WTC11 (cell line): ENCODE measurements at regions of chr17 and their contacts with region 1.

Region 1: DNA sequence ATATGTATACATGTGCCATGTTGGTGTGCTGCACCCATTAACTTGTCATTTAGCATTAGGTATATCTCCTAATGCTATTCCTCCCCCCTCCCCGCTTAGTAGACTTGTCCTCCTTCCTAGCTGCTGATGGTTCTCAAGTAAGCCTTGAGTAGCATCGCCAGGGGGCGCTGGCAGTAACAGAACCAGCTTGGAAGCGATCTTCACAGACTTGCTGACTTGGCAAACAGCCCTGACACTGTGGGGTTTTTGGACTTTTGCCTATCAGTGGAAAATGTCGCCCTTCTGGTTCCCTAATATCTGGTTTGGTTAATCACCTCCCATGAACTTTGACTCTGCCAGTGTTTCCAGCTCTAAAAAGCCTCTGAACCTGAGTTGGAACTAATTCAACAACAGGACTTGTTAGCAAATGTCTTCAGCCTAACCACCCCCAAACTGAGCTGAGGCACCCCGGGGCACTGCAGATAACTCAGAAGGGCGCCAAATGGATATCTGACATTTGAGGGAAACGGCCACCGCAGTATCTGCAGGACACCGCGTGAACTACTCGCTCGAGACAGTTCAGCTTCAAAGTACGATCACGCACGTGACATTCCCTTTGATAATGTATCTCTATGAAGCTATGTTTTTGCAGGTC is 15.4 kb upstream of the SPATA32 start:
- DNase-seq: peak; percentile 96
- ATAC-seq: peak; percentile 87
- H3K4me3 Mint-ChIP-seq: no peak overlapping the region
- H3K27ac Mint-ChIP-seq: no peak overlapping the region
- H3K4me1 Mint-ChIP-seq: peaks cover 12% of the 10 kb centered on the region
- H3K27me3 Mint-ChIP-seq: no peaks in the 10 kb centered on the region
- CTCF ChIP-seq: peak; percentile 72

Region 2: DNA sequence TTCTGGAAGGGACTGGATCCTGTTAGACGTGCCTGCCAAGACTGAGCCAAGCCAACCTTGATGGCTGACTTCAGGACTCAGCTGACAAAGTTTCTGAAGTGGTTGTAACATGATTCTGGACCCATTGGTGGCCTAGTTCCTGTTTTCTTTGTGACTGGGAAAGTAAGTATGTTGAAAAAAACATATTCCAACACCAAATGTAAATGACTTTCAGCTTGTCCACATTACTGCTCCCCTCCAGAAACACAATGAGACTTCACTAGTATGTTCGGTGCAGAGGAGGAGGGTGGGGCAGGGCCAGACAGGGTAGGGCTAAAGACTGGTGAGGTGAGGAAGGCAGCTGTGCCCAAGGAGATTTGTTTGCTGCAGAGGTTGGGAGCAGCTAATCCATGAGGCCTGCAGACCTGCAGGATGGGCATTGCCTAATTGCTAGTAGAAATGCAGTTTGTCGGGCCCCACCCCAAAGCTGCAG is 189.8 kb before region 1 on chr17:
- CTCF ChIA-PET with region 1: no interaction called
- POLR2A ChIA-PET with region 1: no interaction called
- DNase-seq: no peak
- ATAC-seq: no peak
- H3K4me3 Mint-ChIP-seq: no peak overlapping the region
- H3K27ac Mint-ChIP-seq: no peak overlapping the region
- H3K4me1 Mint-ChIP-seq: peaks cover 7% of the 10 kb centered on the region
- H3K27me3 Mint-ChIP-seq: no peaks in the 10 kb centered on the region
- CTCF ChIP-seq: no peak

Region 3: GRCh38 chr17:45218895-45219661 is 58.3 kb before region 1 on chr17:
- CTCF ChIA-PET with region 1: interaction called, 30 read pairs
- POLR2A ChIA-PET with region 1: no interaction called
- DNase-seq: peak; percentile 95
- ATAC-seq: peak; percentile 54
- H3K4me3 Mint-ChIP-seq: peak overlapping the region; percentile 38
- H3K27ac Mint-ChIP-seq: no peak overlapping the region
- H3K4me1 Mint-ChIP-seq: peaks cover 7% of the 10 kb centered on the region; the same call in 1 of the 2 replicates
- H3K27me3 Mint-ChIP-seq: peaks cover 60% of the 10 kb centered on the region
- CTCF ChIP-seq: peak; percentile 98

Region 4: GRCh38 chr17:45235416-45236281 is 41.7 kb before region 1 on chr17:
- CTCF ChIA-PET with region 1: interaction called, 24 read pairs
- POLR2A ChIA-PET with region 1: no interaction called
- DNase-seq: peak; percentile 94
- ATAC-seq: peak; percentile 69
- H3K4me3 Mint-ChIP-seq: no peak overlapping the region
- H3K27ac Mint-ChIP-seq: no peak overlapping the region
- H3K4me1 Mint-ChIP-seq: peaks cover 9% of the 10 kb centered on the region
- H3K27me3 Mint-ChIP-seq: peaks cover 63% of the 10 kb centered on the region
- CTCF ChIP-seq: peak; percentile 81

Region 5: DNA sequence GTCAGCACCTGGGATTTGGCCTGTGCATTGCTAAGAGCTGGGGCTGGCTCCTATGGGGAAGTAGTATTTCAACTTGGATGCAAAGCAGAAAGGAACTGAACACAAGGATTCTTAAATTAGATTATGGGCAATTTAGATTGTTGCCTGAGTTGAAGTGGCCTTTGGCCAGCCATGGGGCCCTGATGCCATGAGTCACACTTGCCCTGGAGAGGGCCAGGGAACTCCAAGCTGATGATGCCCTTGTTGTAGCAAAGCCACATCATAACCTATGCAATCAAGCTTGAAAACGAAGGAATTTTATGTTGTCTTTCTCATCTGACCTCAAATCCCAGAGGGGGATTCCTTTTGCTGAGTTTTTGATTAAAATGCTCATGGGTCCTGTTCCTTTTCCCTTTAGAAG is 11.5 kb before region 1 on chr17:
- CTCF ChIA-PET with region 1: interaction called, 16 read pairs
- POLR2A ChIA-PET with region 1: no interaction called
- DNase-seq: no peak
- ATAC-seq: no peak
- H3K4me3 Mint-ChIP-seq: no peak overlapping the region
- H3K27ac Mint-ChIP-seq: no peak overlapping the region
- H3K4me1 Mint-ChIP-seq: peaks cover 9% of the 10 kb centered on the region; the same call in 1 of the 2 replicates
- H3K27me3 Mint-ChIP-seq: peaks cover 7% of the 10 kb centered on the region
- CTCF ChIP-seq: no peak

Region 6: GRCh38 chr17:45317112-45317928 is 40.0 kb after region 1 on chr17:
- CTCF ChIA-PET with region 1: interaction called, 28 read pairs
- POLR2A ChIA-PET with region 1: no interaction called
- DNase-seq: peak; percentile 100
- ATAC-seq: peak; percentile 92
- H3K4me3 Mint-ChIP-seq: peak overlapping the region; percentile 85
- H3K27ac Mint-ChIP-seq: peak overlapping the region; percentile 90
- H3K4me1 Mint-ChIP-seq: peaks cover 22% of the 10 kb centered on the region
- H3K27me3 Mint-ChIP-seq: peaks cover 37% of the 10 kb centered on the region
- CTCF ChIP-seq: no peak

Region 7: DNA sequence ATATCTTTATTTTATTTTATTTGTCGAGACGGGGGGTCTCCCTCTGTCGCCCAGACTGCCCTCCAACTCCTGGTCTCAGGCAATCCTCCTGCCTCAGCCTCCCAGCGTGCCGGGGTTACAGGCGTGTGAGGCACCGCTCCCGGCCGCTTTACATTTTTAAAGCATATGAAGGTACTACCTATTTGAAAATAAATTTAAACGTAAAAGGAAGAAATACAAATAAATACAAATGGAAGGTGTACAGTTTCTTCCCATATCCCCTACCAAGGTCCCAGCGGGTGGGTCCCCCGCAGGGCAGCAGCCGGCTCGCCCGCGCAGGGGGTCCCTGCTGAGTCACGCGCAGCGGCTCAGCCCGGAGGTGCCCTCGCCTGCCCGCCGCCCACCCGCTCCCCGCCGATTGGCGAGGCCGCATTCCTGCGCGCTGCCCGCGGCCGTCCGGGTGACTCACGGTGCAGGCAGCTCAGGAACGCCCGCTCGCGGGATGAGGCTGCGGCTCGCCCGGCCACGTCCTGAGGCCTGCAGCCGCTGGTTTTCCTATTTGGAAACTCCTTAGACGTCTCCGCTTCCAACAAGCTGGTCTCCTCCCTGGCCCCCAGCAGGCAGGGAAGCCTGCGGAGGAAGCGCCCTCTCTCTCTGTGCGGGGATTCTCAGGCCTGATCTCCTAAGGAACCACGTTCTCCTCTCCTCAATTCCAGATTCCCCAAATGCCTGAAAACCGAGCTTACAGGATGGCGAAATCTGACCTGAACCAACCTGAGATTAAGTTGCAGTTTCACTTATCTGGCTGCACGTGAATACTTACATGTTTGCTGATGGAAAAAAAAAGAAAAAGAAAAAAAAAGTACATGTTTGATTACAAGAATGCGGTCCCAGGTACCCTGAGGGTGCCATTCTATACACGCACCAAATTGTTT is 94.3 kb after region 1 on chr17:
- CTCF ChIA-PET with region 1: interaction called, 12 read pairs
- POLR2A ChIA-PET with region 1: no interaction called
- DNase-seq: peak; percentile 91
- ATAC-seq: peak; percentile 87
- H3K4me3 Mint-ChIP-seq: peak overlapping the region; percentile 66
- H3K27ac Mint-ChIP-seq: peak overlapping the region; percentile 100
- H3K4me1 Mint-ChIP-seq: peaks cover 53% of the 10 kb centered on the region
- H3K27me3 Mint-ChIP-seq: peaks cover 2% of the 10 kb centered on the region; the same call in 1 of the 2 replicates
- CTCF ChIP-seq: no peak

Region 8: GRCh38 chr17:45394913-45395568 is 117.7 kb after region 1 on chr17:
- CTCF ChIA-PET with region 1: interaction called, 43 read pairs
- POLR2A ChIA-PET with region 1: no interaction called
- DNase-seq: peak; percentile 88
- ATAC-seq: peak; percentile 81
- H3K4me3 Mint-ChIP-seq: peak overlapping the region; percentile 34
- H3K27ac Mint-ChIP-seq: no peak overlapping the region
- H3K4me1 Mint-ChIP-seq: peaks cover 15% of the 10 kb centered on the region
- H3K27me3 Mint-ChIP-seq: peaks cover 3% of the 10 kb centered on the region; the same call in 1 of the 2 replicates
- CTCF ChIP-seq: peak; percentile 71

Region 9: GRCh38 chr17:45451141-45451540 is 173.8 kb after region 1 on chr17:
- CTCF ChIA-PET with region 1: no interaction called
- POLR2A ChIA-PET with region 1: no interaction called
- DNase-seq: peak; percentile 44
- ATAC-seq: peak; percentile 24; the same call in 1 of the 2 replicates
- H3K4me3 Mint-ChIP-seq: no peak overlapping the region
- H3K27ac Mint-ChIP-seq: no peak overlapping the region
- H3K4me1 Mint-ChIP-seq: peaks cover 3% of the 10 kb centered on the region
- H3K27me3 Mint-ChIP-seq: no peaks in the 10 kb centered on the region
- CTCF ChIP-seq: no peak